ENCODE measurements at regions of chr2 and their contacts with region 1.

Region 1: GRCh38 chr2:102350137-102350793 is 5.3 kb upstream of the IL18R1 start:
- DNase-seq: no peak
- CTCF ChIP-seq: no peak

Region 2: DNA sequence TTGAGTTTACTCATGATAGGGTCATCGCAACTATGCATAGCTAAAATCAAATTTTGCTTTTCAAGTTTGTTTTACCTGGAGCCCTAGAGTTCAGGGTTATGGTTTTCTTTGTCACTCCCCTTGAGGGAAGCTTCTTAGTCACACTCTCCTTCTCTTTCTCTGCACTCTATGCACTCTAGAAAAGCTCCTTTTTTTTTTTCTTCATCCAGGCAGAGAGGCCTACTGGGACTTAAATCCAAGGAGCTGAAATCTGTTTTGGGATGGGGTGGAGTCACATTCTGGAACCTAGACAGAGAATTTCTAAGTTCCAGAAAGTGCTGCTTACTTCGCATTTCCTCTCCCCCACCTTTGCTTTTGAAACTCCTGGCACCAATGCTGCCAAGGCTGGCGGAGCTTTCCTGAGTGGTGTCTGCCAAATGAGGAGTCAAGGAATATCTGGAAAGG is 13.7 kb before region 1 on chr2:
- CTCF ChIA-PET with region 1: interaction called, 21 read pairs
- POLR2A ChIA-PET with region 1: no interaction called
- DNase-seq: no peak
- CTCF ChIP-seq: no peak